A673 (cell line): ENCODE measurements at regions of chr10 and their contacts with region 1.

Region 1: DNA sequence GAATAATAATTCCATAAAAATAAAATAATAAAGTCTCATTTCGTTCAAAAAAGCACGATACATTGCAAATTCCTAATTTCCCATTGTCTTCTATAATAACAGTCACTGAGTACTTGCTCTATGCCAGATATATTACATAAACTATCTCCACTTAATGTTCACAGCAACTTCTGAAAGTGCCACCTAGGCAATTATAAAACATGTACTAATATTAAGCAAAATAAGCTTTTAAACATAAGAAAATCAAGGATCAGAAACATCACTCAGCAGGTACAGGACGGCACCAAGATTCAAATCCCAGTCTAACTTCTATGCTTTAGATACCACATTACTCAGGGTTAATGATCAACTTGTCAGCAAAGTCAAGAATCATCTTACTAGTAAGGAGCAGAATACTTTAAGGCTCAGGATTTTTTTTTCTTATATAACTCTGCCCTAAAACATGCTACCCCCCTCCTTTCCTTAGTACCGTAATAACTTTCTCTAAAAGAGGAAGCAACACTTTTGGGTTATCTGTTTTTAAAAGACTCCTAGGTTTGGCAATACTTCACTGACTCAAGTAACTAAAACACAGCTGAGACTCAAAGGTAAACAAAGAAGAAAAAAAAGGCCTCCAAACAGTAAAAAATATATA is 51.3 kb downstream of the USP6NL start:
- DNase-seq: no peak
- H3K4me3 ChIP-seq: no peak overlapping the region
- H3K27ac ChIP-seq: no peak overlapping the region
- H3K4me1 ChIP-seq: peaks cover 45% of the 10 kb centered on the region
- H3K27me3 ChIP-seq: no peaks in the 10 kb centered on the region
- CTCF ChIP-seq: no peak

Region 2: DNA sequence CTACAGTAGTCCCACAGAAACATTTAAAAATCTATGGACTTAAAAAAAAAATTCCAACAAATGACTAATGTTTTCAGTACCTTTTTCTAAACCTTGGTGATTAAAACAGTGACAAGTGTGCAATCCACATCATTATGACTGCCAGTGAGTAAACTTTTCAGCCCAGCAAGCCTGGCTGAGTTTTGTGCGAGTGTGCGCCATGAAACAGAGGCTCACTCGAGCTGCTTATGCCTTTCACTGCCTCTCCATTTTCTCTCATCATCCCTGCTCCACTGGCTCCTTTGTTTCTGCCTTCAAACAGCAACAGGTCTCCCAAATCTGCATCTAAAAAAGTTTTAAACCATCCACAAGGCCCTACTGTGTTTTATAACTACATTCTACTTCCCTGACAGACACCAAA is 54.6 kb before region 1 on chr10:
- CTCF ChIA-PET with region 1: no interaction called
- POLR2A ChIA-PET with region 1: no interaction called
- intact Hi-C with region 1: no loop called
- DNase-seq: no peak
- H3K4me3 ChIP-seq: no peak overlapping the region
- H3K27ac ChIP-seq: no peak overlapping the region
- H3K4me1 ChIP-seq: peaks cover 29% of the 10 kb centered on the region
- H3K27me3 ChIP-seq: no peaks in the 10 kb centered on the region
- CTCF ChIP-seq: no peak

Region 3: GRCh38 chr10:11573497-11573896 is 13.3 kb after region 1 on chr10:
- CTCF ChIA-PET with region 1: no interaction called
- POLR2A ChIA-PET with region 1: no interaction called
- intact Hi-C with region 1: no loop called
- DNase-seq: peak; percentile 75
- H3K4me3 ChIP-seq: peak overlapping the region; percentile 2
- H3K27ac ChIP-seq: peak overlapping the region; percentile 58
- H3K4me1 ChIP-seq: peaks cover 44% of the 10 kb centered on the region
- H3K27me3 ChIP-seq: no peaks in the 10 kb centered on the region
- CTCF ChIP-seq: no peak

Region 4: GRCh38 chr10:11604865-11605650 is 44.9 kb after region 1 on chr10:
- CTCF ChIA-PET with region 1: no interaction called
- POLR2A ChIA-PET with region 1: no interaction called
- intact Hi-C with region 1: loop called (anchors 5 kb)
- DNase-seq: no peak
- H3K4me3 ChIP-seq: peak overlapping the region; percentile 12
- H3K27ac ChIP-seq: peak overlapping the region; percentile 13
- H3K4me1 ChIP-seq: peaks cover 54% of the 10 kb centered on the region
- H3K27me3 ChIP-seq: no peaks in the 10 kb centered on the region
- CTCF ChIP-seq: no peak